ENCODE measurements at regions of chr12 and their contacts with region 1.

Region 1: GRCh38 chr12:110280779-110281548 is at the start of gene ATP2A2:
- DNase-seq: peak; percentile 88 to 92
- ATAC-seq: peak; percentile 88 to 96 (median 90)
- H3K4me3 ChIP-seq: peak within 1 kb of the TSS; percentile 76 to 96 (median 91)
- H3K27ac ChIP-seq: peak within 1 kb of the TSS; percentile 94 to 100 (median 99)
- H3K4me1 ChIP-seq: peaks cover 0 to 58% (median 47%) of the 10 kb centered on the region in 9 donors
- H3K27me3 ChIP-seq: no peaks in the 10 kb centered on the region
- CTCF ChIP-seq: no peak
- total RNA-seq, gene ATP2A2: 1,003 to 4,750 (median 1,632) TPM

Region 2: GRCh38 chr12:110109037-110109836 is 171.7 kb before region 1 on chr12:
- intact Hi-C with region 1: loop called in 4 of 10 experiments (anchors 2 to 10 kb)
- DNase-seq: peak; percentile 60 to 69
- ATAC-seq: peak; percentile 70 to 91 (median 82)
- H3K4me3 ChIP-seq: no peak overlapping the region
- H3K27ac ChIP-seq: peak overlapping the region; percentile 64 to 88 (median 80)
- H3K4me1 ChIP-seq: peaks cover 8 to 45% (median 32%) of the 10 kb centered on the region in 9 donors
- H3K27me3 ChIP-seq: no peaks in the 10 kb centered on the region
- CTCF ChIP-seq: no peak

Region 3: DNA sequence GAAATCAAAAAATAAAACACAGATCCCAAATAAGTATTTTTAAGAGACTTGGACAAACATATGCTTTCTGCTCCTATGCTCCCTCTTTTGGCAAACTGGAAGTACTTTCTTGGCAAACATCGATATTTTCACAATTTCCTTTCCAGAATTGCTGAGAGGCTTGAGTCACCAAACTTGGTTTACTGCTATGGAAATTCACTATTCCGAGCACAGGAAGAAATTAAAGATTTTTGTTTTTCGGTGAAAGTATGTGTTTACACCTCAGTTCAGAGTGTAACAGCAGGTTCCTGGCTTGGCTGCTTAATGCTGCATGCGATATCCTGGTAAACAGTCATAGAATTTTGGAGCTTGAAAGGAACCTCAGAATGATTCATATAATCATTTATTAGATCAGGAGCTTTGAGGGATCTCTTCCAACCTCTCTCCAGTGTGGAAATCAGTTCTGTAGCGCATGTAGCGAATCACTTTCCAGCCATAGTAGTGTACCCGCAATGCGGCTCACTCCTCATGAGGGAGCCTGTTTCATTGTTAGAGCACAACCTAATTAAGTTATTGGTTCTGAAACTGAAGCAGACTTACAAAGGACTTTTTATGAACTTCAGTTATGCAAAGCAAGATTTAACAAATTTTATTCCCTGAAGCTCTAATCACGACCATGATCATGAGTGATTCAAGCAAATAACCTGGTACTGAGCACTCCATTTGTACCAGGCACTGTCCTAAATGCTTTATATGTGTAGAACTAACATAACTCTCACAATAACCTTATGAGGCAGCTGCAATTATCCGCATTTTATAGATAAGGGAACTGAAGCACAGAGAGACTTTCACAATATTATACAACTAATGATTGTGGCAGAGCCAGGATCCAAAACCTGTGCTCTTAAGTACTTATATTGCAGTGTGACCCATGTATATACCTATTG is 56.3 kb before region 1 on chr12:
- intact Hi-C with region 1: loop called in 7 of 10 experiments (anchors 2 to 10 kb)
- DNase-seq: no peak
- ATAC-seq: peak; percentile 27 to 76 (median 66)
- H3K4me3 ChIP-seq: peak overlapping the region in 8 of 10 donors; percentile 2 to 44 (median 28)
- H3K27ac ChIP-seq: peak overlapping the region; percentile 20 to 82 (median 66)
- H3K4me1 ChIP-seq: peaks cover 2 to 51% (median 34%) of the 10 kb centered on the region in 9 donors
- H3K27me3 ChIP-seq: no peaks in the 10 kb centered on the region
- CTCF ChIP-seq: peak; percentile 27 to 73 (median 54)

Region 4: DNA sequence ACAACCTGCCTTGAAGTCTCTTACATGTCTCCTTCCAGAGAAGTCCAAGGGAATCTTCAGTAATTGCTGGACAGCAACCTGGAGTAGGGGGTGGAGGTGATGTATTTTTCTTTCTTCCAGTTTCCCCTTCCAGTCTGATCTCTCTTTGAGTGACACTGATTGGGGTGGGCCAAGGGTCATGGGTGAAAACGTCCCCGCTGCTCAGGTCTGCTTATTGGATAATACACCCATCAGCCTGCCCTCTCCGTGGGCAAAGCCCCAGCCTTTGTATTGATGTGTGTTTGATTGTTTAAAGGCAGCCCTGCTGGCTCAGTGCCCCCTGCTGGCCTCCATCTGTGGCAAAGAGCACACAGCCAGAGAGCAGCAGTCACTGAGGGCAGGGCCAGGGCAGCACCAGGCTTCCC is 35.6 kb before region 1 on chr12:
- intact Hi-C with region 1: loop called in 2 of 10 experiments (anchors 2 to 5 kb)
- DNase-seq: peak in 1 of 2 donors; percentile 67
- ATAC-seq: peak in 3 of 8 donors; percentile 14 to 68 (median 30)
- H3K4me3 ChIP-seq: no peak overlapping the region
- H3K27ac ChIP-seq: peak overlapping the region; percentile 28 to 94 (median 88)
- H3K4me1 ChIP-seq: peaks cover 19 to 63% (median 39%) of the 10 kb centered on the region in 9 donors
- H3K27me3 ChIP-seq: no peaks in the 10 kb centered on the region
- CTCF ChIP-seq: peak in 6 of 9 donors; percentile 15 to 56 (median 30)

Region 5: GRCh38 chr12:110253176-110253575 is 27.8 kb before region 1 on chr12:
- intact Hi-C with region 1: loop called in 3 of 10 experiments (anchors 2 to 5 kb)
- DNase-seq: peak; percentile 73 to 80
- ATAC-seq: peak; percentile 67 to 87 (median 82)
- H3K4me3 ChIP-seq: peak overlapping the region in 5 of 10 donors; percentile 4 to 15 (median 12)
- H3K27ac ChIP-seq: peak overlapping the region; percentile 81 to 94 (median 87)
- H3K4me1 ChIP-seq: peaks cover 22 to 65% (median 55%) of the 10 kb centered on the region in 9 donors
- H3K27me3 ChIP-seq: no peaks in the 10 kb centered on the region
- CTCF ChIP-seq: no peak

Region 6: GRCh38 chr12:110330544-110330943 is 49.6 kb after region 1 on chr12:
- intact Hi-C with region 1: loop called in 1 of 10 experiments (anchors 5 kb)
- DNase-seq: no peak
- ATAC-seq: peak in 1 of 8 donors; percentile 39
- H3K4me3 ChIP-seq: no peak overlapping the region
- H3K27ac ChIP-seq: peak overlapping the region in 2 of 10 donors; percentile 9 to 10
- H3K4me1 ChIP-seq: peaks cover 0 to 78% (median 32%) of the 10 kb centered on the region in 9 donors
- H3K27me3 ChIP-seq: no peaks in the 10 kb centered on the region
- CTCF ChIP-seq: no peak

Measured in heart right ventricle (tissue), 16 donors.